Mammary epithelial cell (primary cell): ENCODE measurements at regions of chr20 and their contacts with region 1.

Region 1: GRCh38 chr20:40160097-40160550 is 528.9 kb downstream of the MAFB start:
- DNase-seq: peak; percentile 41
- H3K4me3 ChIP-seq: no peak overlapping the region
- H3K27ac ChIP-seq: no peak overlapping the region
- H3K4me1 ChIP-seq: no peaks in the 10 kb centered on the region
- H3K27me3 ChIP-seq: no peaks in the 10 kb centered on the region
- CTCF ChIP-seq: peak; percentile 90 to 93

Region 2: GRCh38 chr20:39773519-39773951 is 386.6 kb before region 1 on chr20:
- CTCF ChIA-PET with region 1: no interaction called
- dilution Hi-C with region 1: no loop called
- in situ Hi-C with region 1: no loop called
- intact Hi-C with region 1: no loop called
- DNase-seq: no peak
- H3K4me3 ChIP-seq: no peak overlapping the region
- H3K27ac ChIP-seq: no peak overlapping the region
- H3K4me1 ChIP-seq: no peaks in the 10 kb centered on the region
- H3K27me3 ChIP-seq: no peaks in the 10 kb centered on the region
- CTCF ChIP-seq: peak in 1 of 2 donors; percentile 25

Region 3: GRCh38 chr20:40120827-40121226 is 39.3 kb before region 1 on chr20:
- CTCF ChIA-PET with region 1: no interaction called
- dilution Hi-C with region 1: no loop called
- in situ Hi-C with region 1: no loop called
- intact Hi-C with region 1: no loop called
- DNase-seq: no peak
- H3K4me3 ChIP-seq: no peak overlapping the region
- H3K27ac ChIP-seq: no peak overlapping the region
- H3K4me1 ChIP-seq: no peaks in the 10 kb centered on the region
- H3K27me3 ChIP-seq: no peaks in the 10 kb centered on the region
- CTCF ChIP-seq: no peak

Region 4: DNA sequence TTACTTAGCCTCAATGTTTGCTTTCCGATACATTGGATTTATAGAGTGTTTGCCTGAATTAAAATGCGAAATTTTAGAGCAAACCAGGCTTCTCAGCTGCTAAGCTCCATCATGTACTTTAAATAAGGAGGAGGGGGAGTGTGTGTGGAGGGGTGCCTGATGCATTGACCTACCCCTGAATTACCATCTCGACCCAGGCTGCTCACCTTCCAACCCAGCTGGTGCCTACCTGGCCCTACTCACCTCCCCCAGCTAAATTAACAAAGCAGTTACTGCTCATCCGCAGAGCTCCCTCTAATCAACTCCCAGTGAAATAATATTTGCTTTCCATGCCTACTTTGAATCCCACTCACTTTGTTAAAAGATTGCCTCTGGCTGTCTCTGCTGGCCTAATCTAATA is 15.5 kb before region 1 on chr20:
- CTCF ChIA-PET with region 1: no interaction called
- dilution Hi-C with region 1: no loop called
- in situ Hi-C with region 1: no loop called
- intact Hi-C with region 1: no loop called
- DNase-seq: no peak
- H3K4me3 ChIP-seq: no peak overlapping the region
- H3K27ac ChIP-seq: no peak overlapping the region
- H3K4me1 ChIP-seq: no peaks in the 10 kb centered on the region
- H3K27me3 ChIP-seq: no peaks in the 10 kb centered on the region
- CTCF ChIP-seq: no peak

Region 5: DNA sequence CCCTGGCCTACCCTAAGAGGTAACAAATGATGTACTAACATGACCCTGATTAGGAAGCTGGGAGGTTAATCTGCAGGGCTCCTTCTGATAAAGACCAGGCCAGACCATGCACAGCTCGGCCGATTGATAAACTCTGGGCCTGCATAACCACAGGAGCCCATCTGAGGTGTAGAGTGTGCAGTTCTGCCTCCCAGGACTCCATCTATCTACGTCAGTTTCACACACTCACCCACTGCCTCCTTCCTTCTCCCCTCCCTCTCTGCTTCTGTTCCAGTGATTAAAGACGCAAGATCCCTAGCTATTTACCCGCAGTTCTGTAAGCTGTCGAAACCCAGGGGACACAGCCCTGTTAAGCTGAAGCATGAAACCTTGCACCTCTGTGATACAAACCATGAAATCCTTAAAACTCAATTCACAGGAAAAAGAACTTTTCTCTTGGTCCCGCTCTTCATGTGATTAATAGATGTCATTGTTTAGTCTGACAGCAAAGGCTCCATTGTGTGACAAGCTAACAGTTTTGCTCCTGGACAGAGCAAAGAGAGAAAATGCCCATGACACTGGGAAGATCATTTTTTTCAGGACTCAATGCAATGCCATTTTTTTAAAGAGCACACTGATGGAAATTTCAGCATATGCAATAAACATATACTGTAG is 58.3 kb after region 1 on chr20:
- CTCF ChIA-PET with region 1: no interaction called
- dilution Hi-C with region 1: no loop called
- in situ Hi-C with region 1: no loop called
- intact Hi-C with region 1: no loop called
- DNase-seq: no peak
- H3K4me3 ChIP-seq: no peak overlapping the region
- H3K27ac ChIP-seq: no peak overlapping the region
- H3K4me1 ChIP-seq: no peaks in the 10 kb centered on the region
- H3K27me3 ChIP-seq: no peaks in the 10 kb centered on the region
- CTCF ChIP-seq: no peak

Region 6: DNA sequence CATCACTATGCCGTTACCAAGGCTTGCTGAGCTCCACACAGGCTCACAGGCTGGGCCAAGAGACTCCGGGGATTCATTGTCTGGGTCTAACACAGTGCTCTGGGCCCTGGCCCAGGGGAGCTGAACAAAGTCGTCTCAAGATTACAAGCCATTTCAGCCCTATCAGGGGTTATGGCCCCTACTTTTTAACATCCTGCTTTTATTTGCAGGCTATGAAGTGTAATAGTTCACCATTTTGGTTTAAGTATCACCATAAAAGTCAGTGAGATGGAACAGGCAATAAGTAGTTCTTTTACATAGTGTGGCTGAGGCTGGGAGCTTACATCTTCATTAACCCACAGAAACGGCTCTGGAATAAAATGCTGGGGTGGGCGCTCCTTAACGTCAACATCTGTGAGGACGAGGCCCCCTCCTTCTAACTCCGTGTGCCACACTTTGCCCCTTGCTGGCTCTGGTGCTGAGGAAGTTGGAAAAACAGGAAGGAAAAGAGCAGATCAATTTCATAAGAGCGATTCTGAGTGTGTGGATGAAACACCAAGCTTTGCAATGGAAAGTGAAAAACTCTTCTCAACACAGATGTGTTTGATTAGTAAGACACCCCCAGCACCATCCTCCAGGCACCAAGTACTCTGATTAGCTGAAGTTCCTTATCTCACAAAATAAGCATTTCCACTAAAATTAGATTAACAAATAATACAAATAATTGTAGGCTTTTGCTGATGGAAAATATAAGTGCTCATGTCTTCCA is 81.6 kb after region 1 on chr20:
- CTCF ChIA-PET with region 1: no interaction called
- dilution Hi-C with region 1: loop called (anchors 5 kb)
- in situ Hi-C with region 1: no loop called
- intact Hi-C with region 1: no loop called
- DNase-seq: no peak
- H3K4me3 ChIP-seq: no peak overlapping the region
- H3K27ac ChIP-seq: no peak overlapping the region
- H3K4me1 ChIP-seq: no peaks in the 10 kb centered on the region
- H3K27me3 ChIP-seq: no peaks in the 10 kb centered on the region
- CTCF ChIP-seq: no peak

Region 7: DNA sequence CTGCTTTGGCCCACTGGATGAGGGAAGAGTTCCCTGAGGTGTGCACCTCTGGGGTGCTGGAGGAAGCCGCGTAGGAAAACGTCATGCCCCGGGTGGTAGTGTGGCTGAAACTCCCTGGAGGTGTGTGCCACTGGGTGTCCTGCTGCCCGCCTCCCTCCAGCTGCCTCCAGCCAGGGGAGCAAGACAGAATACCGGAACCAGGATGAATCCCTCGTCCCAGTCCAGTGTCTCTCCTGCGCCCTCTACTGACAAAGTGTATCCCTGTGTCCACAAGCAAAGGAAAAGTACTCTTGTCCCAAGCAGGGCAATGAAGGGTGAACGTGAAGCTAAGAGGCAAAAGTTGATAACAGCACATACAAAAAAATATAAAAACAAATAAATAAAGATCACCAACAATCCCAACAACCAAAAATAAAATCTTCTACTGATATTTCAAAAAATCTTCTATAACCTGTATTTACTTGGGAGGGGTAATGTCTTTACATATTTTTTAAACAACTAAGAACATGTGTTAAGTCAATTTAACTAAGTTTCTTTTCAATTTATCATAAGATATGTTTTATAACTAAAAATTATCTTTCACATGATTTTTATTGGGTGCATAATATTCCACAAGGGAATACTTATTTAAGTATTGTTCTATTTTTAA is 91.3 kb after region 1 on chr20:
- CTCF ChIA-PET with region 1: no interaction called
- dilution Hi-C with region 1: no loop called
- in situ Hi-C with region 1: no loop called
- intact Hi-C with region 1: loop called (anchors 1 kb)
- DNase-seq: peak; percentile 48
- H3K4me3 ChIP-seq: no peak overlapping the region
- H3K27ac ChIP-seq: no peak overlapping the region
- H3K4me1 ChIP-seq: no peaks in the 10 kb centered on the region
- H3K27me3 ChIP-seq: no peaks in the 10 kb centered on the region
- CTCF ChIP-seq: peak; percentile 70 to 90

Region 8: DNA sequence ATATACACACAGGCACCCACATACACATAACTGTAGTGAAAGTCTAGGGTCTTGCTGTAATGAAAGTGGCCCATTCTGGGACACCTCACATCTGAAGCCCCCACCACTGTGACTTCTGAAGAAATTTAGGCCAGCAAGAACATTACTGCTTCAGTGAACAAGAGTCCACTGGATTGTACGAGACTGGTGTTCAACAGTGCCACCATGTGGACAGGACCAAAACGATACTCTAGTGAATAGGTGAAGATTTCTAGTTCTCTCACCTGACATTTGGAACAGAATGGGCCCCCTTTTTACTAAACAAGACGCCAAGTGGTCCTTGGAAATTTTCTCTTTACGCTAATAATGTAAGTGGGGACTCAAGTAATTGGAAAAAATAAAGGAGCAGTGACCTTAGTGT is 372.0 kb after region 1 on chr20:
- CTCF ChIA-PET with region 1: no interaction called
- dilution Hi-C with region 1: no loop called
- in situ Hi-C with region 1: no loop called
- intact Hi-C with region 1: loop called (anchors 5 kb)
- DNase-seq: peak; percentile 32
- H3K4me3 ChIP-seq: no peak overlapping the region
- H3K27ac ChIP-seq: no peak overlapping the region
- H3K4me1 ChIP-seq: no peaks in the 10 kb centered on the region
- H3K27me3 ChIP-seq: no peaks in the 10 kb centered on the region
- CTCF ChIP-seq: peak; percentile 48 to 58